A549 (cell line): ENCODE measurements at regions of chr2 and their contacts with region 1.

Region 1: DNA sequence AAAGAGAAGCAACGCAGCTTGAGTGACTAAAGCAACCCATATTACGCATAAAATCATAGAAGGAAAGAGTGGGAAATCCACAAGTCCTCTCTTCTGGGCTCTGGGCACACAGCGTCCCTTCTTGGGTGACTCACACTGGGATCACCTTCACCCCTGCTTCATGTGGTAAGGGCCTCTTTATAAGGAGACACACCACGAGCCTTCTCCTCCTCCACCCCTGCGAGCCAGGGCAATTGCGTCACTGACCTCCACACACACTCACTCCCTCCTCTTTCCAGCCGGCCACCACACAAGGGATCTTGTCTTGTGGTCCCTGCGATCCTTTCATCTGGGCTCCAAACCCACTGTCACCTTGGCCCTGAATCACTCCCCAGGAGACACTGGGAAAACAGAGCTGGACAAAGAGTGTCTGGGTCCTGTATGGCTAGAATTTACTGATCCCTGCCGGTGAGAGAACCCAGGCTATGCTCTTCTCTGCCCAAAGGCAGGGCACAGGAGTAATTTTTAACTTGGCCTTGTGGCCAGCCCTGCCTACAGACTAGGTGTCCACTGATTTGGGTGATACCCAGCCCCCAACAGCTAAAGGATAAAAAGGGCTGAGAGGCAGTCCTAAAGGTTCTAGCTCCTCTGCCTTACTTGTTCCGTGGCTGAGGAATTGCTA is 35.3 kb downstream of the NHEJ1 start:
- DNase-seq: peak; percentile 31 to 57
- ATAC-seq: peak; percentile 71 to 80
- H3K4me3 ChIP-seq: no peak overlapping the region
- H3K27ac ChIP-seq: peak overlapping the region; percentile 69 to 73
- H3K4me1 ChIP-seq: peaks cover 37% of the 10 kb centered on the region
- CTCF ChIP-seq: no peak
- EP300 ChIP-seq: no peak
- POLR2A ChIP-seq: no peak
- RAD21 ChIP-seq: no peak

Region 2: DNA sequence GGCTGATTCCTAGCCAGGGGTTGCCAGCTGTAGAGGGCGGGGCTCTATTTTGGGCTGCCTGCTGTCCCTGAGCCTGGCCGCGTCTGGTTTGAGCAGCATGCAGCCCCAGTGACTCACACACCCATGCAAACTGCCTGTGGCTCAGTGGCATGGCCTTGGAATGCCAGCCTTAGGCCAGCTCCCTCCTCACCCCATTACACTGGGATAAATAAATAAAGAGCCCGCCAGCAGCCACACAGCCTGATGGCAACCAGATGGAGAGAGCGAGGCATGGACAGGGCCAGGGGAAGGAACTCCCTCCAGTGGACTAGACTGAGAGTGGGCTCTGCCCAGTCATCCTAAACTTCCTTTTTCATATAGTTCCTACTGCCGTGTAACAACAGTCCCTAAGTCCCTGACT is 17.0 kb after region 1 on chr2:
- CTCF ChIA-PET with region 1: interaction called, 26 read pairs
- POLR2A ChIA-PET with region 1: no interaction called
- DNase-seq: no peak
- ATAC-seq: peak; percentile 68 to 70; a peak in 4 of 6 replicates
- H3K4me3 ChIP-seq: no peak overlapping the region
- H3K27ac ChIP-seq: no peak overlapping the region
- H3K4me1 ChIP-seq: peaks cover 5% of the 10 kb centered on the region; the same call in 1 of the 3 replicates
- CTCF ChIP-seq: no peak
- EP300 ChIP-seq: no peak
- POLR2A ChIP-seq: no peak
- RAD21 ChIP-seq: no peak